ENCODE measurements at regions of chr2 and their contacts with region 1.

Region 1: GRCh38 chr2:218051908-218052307 is 17.1 kb upstream of the RUFY4 start:
- DNase-seq: no peak
- H3K4me3 ChIP-seq: no peak overlapping the region
- CTCF ChIP-seq: no peak

Region 2: GRCh38 chr2:218039171-218039570 is 12.7 kb before region 1 on chr2:
- CTCF ChIA-PET with region 1: interaction called, 11 read pairs
- POLR2A ChIA-PET with region 1: no interaction called
- DNase-seq: no peak
- H3K4me3 ChIP-seq: no peak overlapping the region
- CTCF ChIP-seq: no peak

Measured in AG04449 (cell line).